ENCODE measurements at regions of chr5 and their contacts with region 1.

Region 1: GRCh38 chr5:52799983-52800393 is 12.3 kb downstream of the ITGA1 start:
- DNase-seq: peak; percentile 91 to 97 (median 94)
- ATAC-seq: peak; percentile 92
- H3K4me3 ChIP-seq: peak overlapping the region; percentile 88
- H3K4me3 Mint-ChIP-seq: peak overlapping the region; percentile 92 to 99 (median 98)
- H3K27ac ChIP-seq: peak overlapping the region; percentile 78
- H3K27ac Mint-ChIP-seq: peak overlapping the region; percentile 89 to 98 (median 95)
- H3K4me1 ChIP-seq: peaks cover 25 to 26% of the 10 kb centered on the region in 2 donors
- H3K4me1 Mint-ChIP-seq: peaks cover 36 to 86% (median 62%) of the 10 kb centered on the region in 7 donors
- H3K27me3 ChIP-seq: no peaks in the 10 kb centered on the region
- H3K27me3 Mint-ChIP-seq: peaks cover 0 to 6% (median 0%) of the 10 kb centered on the region in 5 donors

Region 2: DNA sequence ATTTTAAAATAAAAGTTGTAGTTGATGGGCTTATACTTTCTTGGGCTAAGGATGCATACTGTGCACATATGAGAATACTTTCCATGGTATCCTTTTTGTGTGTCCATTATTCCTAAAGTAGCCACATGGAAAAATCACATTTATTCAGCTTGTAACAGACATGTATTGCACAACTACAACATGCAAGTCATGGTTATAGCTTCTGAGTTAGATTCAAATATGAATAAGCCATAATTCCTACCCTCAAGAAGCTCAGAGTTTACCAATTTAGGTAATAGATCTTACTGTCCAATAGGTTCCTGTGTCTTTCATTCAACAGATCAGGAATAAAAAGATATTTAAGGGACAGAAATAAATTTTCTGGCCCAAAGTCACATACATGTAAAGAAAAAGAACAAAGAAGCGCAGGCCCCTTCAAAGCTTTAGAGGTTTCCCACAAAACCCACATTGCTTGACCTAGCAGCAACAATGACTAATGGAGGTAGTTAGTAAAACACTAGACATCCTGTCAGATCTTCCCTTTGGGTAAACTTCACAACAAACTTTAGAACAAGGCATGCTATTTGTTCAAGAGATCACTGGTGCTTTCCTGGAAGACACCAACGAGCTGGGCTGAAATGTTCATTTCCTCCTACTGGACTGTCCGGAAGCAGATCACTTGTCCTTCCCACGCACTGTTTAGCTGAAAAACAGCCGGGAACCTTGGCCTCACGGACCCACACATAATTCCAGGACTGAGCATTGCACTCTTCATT is 90.6 kb before region 1 on chr5:
- CTCF ChIA-PET with region 1: no interaction called
- POLR2A ChIA-PET with region 1: interaction called, 6 read pairs
- intact Hi-C with region 1: loop called in 1 of 2 experiments (anchors 5 kb)
- DNase-seq: peak in 1 of 9 donors; percentile 36
- ATAC-seq: no peak
- H3K4me3 ChIP-seq: no peak overlapping the region
- H3K4me3 Mint-ChIP-seq: peak overlapping the region in 1 of 10 donors; percentile 50
- H3K27ac ChIP-seq: no peak overlapping the region
- H3K27ac Mint-ChIP-seq: peak overlapping the region in 1 of 9 donors; percentile 61
- H3K4me1 ChIP-seq: peaks cover 20 to 39% of the 10 kb centered on the region in 2 donors
- H3K4me1 Mint-ChIP-seq: peaks cover 24 to 83% (median 63%) of the 10 kb centered on the region in 7 donors
- H3K27me3 ChIP-seq: no peaks in the 10 kb centered on the region
- H3K27me3 Mint-ChIP-seq: peaks cover 0 to 5% (median 0%) of the 10 kb centered on the region in 5 donors

Region 3: GRCh38 chr5:52771343-52772039 is 28.5 kb before region 1 on chr5:
- CTCF ChIA-PET with region 1: interaction called, 4 read pairs
- POLR2A ChIA-PET with region 1: interaction called, 3 read pairs
- intact Hi-C with region 1: loop called in 1 of 2 experiments (anchors 1 kb)
- DNase-seq: peak in 4 of 9 donors; percentile 21 to 43 (median 26)
- ATAC-seq: peak; percentile 71
- H3K4me3 ChIP-seq: peak overlapping the region; percentile 3
- H3K4me3 Mint-ChIP-seq: peak overlapping the region in 9 of 10 donors; percentile 42 to 78 (median 67)
- H3K27ac ChIP-seq: peak overlapping the region; percentile 31
- H3K27ac Mint-ChIP-seq: peak overlapping the region; percentile 67 to 94 (median 85)
- H3K4me1 ChIP-seq: peaks cover 34 to 45% of the 10 kb centered on the region in 2 donors
- H3K4me1 Mint-ChIP-seq: peaks cover 35 to 76% (median 49%) of the 10 kb centered on the region in 7 donors
- H3K27me3 ChIP-seq: no peaks in the 10 kb centered on the region
- H3K27me3 Mint-ChIP-seq: peaks cover 0 to 7% (median 0%) of the 10 kb centered on the region in 5 donors

Region 4: GRCh38 chr5:52884453-52884852 is 84.5 kb after region 1 on chr5:
- CTCF ChIA-PET with region 1: no interaction called
- POLR2A ChIA-PET with region 1: no interaction called
- intact Hi-C with region 1: no loop called
- DNase-seq: no peak
- ATAC-seq: no peak
- H3K4me3 ChIP-seq: no peak overlapping the region
- H3K4me3 Mint-ChIP-seq: no peak overlapping the region
- H3K27ac ChIP-seq: no peak overlapping the region
- H3K27ac Mint-ChIP-seq: no peak overlapping the region
- H3K4me1 ChIP-seq: no peaks in the 10 kb centered on the region
- H3K4me1 Mint-ChIP-seq: peaks cover 0 to 7% (median 1%) of the 10 kb centered on the region in 7 donors
- H3K27me3 ChIP-seq: no peaks in the 10 kb centered on the region
- H3K27me3 Mint-ChIP-seq: peaks cover 0 to 10% (median 0%) of the 10 kb centered on the region in 5 donors

Region 5: GRCh38 chr5:52915176-52915875 is 115.3 kb after region 1 on chr5:
- CTCF ChIA-PET with region 1: interaction called, 4 read pairs
- POLR2A ChIA-PET with region 1: no interaction called
- intact Hi-C with region 1: loop called in 1 of 2 experiments (anchors 5 kb)
- DNase-seq: peak in 8 of 9 donors; percentile 30 to 77 (median 69)
- ATAC-seq: peak; percentile 97
- H3K4me3 ChIP-seq: no peak overlapping the region
- H3K4me3 Mint-ChIP-seq: peak overlapping the region in 9 of 10 donors; percentile 19 to 79 (median 73)
- H3K27ac ChIP-seq: no peak overlapping the region
- H3K27ac Mint-ChIP-seq: peak overlapping the region in 2 of 9 donors; percentile 10 to 30
- H3K4me1 ChIP-seq: no peaks in the 10 kb centered on the region
- H3K4me1 Mint-ChIP-seq: peaks cover 5 to 9% (median 8%) of the 10 kb centered on the region in 7 donors
- H3K27me3 ChIP-seq: no peaks in the 10 kb centered on the region
- H3K27me3 Mint-ChIP-seq: peaks cover 0 to 9% (median 0%) of the 10 kb centered on the region in 5 donors

Region 6: DNA sequence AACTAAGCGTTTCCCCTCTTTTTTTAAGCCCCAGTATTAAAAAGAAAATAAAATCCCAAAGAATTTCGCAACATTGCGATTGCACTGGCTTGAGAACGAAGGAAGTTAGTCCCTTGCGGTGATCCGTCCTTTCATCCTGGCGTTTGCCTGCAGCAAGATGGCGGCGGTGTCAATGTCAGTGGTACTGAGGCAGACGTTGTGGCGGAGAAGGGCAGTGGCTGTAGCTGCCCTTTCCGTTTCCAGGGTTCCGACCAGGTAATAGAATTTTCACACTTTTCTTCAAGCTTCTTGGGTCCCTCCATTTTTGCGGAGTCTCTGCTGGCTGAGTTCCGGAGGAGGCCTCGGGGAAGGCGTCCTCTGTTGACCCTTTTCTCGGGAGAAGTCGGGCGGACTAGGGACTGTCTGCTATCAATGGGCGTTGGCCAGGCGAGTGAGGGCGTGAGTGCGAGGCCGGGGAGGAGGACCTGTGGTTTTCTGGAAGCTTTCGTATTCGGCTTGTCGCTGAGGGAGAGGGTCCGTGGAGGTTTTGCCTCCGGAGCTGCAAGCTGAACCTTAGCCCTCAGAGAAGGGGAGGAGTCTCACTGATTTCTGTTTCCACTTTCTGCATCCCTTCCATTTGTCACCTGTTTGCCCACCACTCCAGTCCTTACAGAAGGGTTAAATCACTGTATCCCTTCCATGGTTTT is 760.7 kb after region 1 on chr5 and contains the start of gene NDUFS4:
- CTCF ChIA-PET with region 1: no interaction called
- POLR2A ChIA-PET with region 1: no interaction called
- intact Hi-C with region 1: loop called in 1 of 2 experiments (anchors 1 kb)
- DNase-seq: peak; percentile 44 to 76 (median 68)
- ATAC-seq: peak; percentile 94
- H3K4me3 ChIP-seq: peak within 1 kb of the TSS; percentile 54
- H3K4me3 Mint-ChIP-seq: peak within 1 kb of the TSS; percentile 97 to 100 (median 98)
- H3K27ac ChIP-seq: peak within 1 kb of the TSS; percentile 74
- H3K27ac Mint-ChIP-seq: peak within 1 kb of the TSS; percentile 91 to 99 (median 95)
- H3K4me1 ChIP-seq: peaks cover 0 to 18% of the 10 kb centered on the region in 2 donors
- H3K4me1 Mint-ChIP-seq: peaks cover 20 to 56% (median 50%) of the 10 kb centered on the region in 7 donors
- H3K27me3 ChIP-seq: no peaks in the 10 kb centered on the region
- H3K27me3 Mint-ChIP-seq: peaks cover 13 to 35% (median 28%) of the 10 kb centered on the region in 5 donors
- total RNA-seq, gene NDUFS4: 23.4 to 54.8 (median 35.6) TPM

Measured in naive thymus-derived CD4-positive, alpha-beta T cell (primary cell).